Activated B cell treated with CpG ODN at 0.5 μM for 24 hours (primary cell): ENCODE measurements at regions of chr11 and their contacts with region 1.

Region 1: DNA sequence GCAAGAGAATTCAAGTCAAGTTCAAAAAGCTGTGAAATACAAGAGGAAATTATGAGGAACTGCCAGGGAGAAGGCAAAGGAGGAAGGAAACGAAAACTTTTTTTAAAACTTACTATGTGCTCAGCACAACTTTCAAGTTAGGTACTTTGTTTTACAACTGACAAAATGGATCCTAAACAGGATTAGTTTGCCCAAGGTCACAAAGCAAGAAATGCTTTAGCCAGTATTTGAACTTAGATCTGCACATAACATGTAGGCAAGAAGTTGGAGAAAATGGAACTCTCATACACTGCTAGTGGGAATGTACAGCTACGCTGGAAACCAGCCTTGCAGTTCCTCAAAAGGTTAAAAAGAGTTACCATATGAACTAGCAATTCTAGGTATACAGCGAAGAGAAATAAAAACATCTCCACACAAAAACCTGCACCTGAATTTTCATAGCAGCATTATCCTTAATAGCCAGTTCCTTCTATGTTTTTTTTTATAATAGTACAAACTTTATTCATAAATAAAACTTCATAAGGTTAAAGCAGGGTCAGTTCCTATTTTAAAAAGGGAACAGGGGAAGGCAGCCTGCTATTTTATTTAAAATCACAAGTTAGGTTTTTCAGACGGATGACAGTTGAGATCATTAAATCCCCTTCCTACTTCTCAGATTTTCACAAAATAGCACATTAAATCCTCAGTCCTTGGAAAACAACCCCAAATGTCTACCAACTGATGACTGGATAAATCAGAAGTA is 19.2 kb downstream of the DDX6 start:
- DNase-seq: no peak
- ATAC-seq: no peak
- H3K4me3 Mint-ChIP-seq: peak overlapping the region; percentile 69
- H3K27ac Mint-ChIP-seq: peak overlapping the region; percentile 54
- H3K4me1 Mint-ChIP-seq: peaks cover 79% of the 10 kb centered on the region
- H3K27me3 Mint-ChIP-seq: no peaks in the 10 kb centered on the region
- CTCF ChIP-seq: no peak

Region 2: DNA sequence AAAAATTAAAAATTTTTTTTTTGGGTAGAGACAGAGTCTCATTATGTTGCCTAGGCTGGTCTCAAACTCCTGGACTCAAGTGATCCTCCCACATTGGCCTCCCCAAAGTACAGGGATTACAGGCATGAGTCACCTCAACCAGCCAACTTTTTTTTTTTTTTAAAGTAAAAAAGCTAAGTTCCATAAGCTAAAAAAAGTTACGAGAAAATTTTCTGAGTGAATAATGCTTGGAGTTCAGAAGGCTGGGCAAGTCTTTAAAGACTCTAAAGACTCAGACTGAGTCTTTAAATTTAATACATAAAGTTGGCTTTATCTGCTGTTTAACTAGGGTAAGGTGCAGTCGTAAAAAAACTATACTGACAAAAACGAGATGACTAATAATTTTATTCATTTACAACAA is 13.6 kb after region 1 on chr11:
- CTCF ChIA-PET with region 1: interaction called, 3 read pairs
- POLR2A ChIA-PET with region 1: interaction called, 10 read pairs
- intact Hi-C with region 1: loop called (anchors 2 kb)
- DNase-seq: no peak
- ATAC-seq: no peak
- H3K4me3 Mint-ChIP-seq: peak overlapping the region; percentile 60
- H3K27ac Mint-ChIP-seq: peak overlapping the region; percentile 63
- H3K4me1 Mint-ChIP-seq: peaks cover 67% of the 10 kb centered on the region
- H3K27me3 Mint-ChIP-seq: no peaks in the 10 kb centered on the region
- CTCF ChIP-seq: no peak

Region 3: GRCh38 chr11:119126675-119127268 is 355.1 kb after region 1 on chr11:
- CTCF ChIA-PET with region 1: no interaction called
- POLR2A ChIA-PET with region 1: interaction called, 10 read pairs
- intact Hi-C with region 1: no loop called
- DNase-seq: no peak
- ATAC-seq: no peak
- H3K4me3 Mint-ChIP-seq: no peak overlapping the region
- H3K27ac Mint-ChIP-seq: no peak overlapping the region
- H3K4me1 Mint-ChIP-seq: peaks cover 22% of the 10 kb centered on the region
- H3K27me3 Mint-ChIP-seq: no peaks in the 10 kb centered on the region
- CTCF ChIP-seq: no peak